Dorsolateral prefrontal cortex (tissue), 120 donors: ENCODE measurements at regions of chr16 and their contacts with region 1.

Region 1: DNA sequence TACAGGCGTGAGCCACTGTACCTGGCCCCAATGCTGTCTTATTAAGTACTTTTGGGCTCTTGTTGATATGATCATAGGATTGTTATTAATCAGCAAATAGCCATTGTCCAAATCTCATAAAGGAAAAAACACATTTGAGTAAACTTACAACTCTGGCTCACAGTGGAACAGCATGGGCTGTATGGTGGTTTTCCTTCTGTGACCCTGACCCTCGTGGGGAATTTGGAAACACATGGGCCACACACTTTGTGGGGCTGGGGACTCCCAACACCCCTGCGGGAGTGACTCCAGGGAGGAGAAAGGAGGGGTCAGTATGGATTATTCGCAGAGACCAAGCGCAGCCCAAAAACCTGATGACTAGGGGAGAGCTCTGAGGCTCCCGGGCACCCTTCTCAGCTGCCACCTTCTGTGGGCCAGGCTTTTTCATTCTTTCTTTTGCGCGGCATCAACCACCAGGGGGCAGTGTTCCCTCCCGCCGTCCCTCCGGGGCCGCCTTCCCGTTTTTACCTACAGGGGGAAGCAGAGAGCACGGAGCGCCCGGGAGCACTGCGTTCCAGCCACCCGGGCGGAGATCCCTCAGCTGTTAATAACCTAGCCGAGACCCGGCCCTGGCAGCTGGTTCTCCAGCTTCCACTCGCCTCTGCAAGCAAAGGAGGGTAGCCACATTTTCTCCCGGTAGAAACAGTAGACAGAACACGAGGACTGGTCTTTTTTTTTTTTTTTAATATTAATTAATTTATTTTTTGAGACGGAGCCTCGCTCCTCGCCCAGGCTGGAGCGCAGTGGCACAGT is 9.7 kb downstream of the TSNAXIP1 start:
- DNase-seq: peak; percentile 52 to 87 (median 70)
- H3K4me3 ChIP-seq: peak overlapping the region in 13 of 59 donors; percentile 2 to 40 (median 20)
- H3K27ac ChIP-seq: peak overlapping the region in 6 of 59 donors; percentile 9 to 62 (median 40)
- H3K27me3 ChIP-seq: no peaks in the 10 kb centered on the region
- CTCF ChIP-seq: peak; percentile 92 to 100 (median 100)

Region 2: DNA sequence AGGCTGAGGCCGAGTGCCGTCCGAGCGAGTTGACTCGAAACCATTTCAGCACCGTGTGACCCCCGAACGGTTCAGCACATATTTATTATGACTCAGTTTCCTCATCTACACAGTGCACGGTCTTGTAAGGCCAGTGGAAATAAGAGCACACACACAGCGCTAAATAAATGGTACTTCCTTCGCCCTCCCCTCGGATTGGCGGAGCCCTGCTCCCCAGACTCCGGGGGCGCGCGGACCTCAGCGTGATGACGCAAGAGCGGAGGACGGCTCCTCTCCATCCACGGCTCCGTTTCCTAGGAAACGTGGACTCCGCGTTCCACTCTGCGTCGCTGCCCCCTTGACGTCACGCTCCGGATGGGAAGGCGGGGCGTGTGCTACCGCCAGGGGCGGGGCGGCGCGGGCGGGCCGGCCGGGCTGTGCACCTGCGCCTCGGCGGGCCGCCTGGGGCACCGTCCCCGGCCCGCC is 155.8 kb before region 1 on chr16 and contains the start of gene PARD6A:
- intact Hi-C with region 1: no loop called
- DNase-seq: peak; percentile 90 to 98 (median 98)
- H3K4me3 ChIP-seq: peak within 1 kb of the TSS; percentile 57 to 100 (median 92)
- H3K27ac ChIP-seq: peak within 1 kb of the TSS; percentile 82 to 99 (median 97)
- H3K27me3 ChIP-seq: no peaks in the 10 kb centered on the region
- CTCF ChIP-seq: peak in 13 of 56 donors; percentile 2 to 29 (median 8)
- total RNA-seq, gene PARD6A: 13.9 to 52.7 (median 27.3) TPM

Region 3: DNA sequence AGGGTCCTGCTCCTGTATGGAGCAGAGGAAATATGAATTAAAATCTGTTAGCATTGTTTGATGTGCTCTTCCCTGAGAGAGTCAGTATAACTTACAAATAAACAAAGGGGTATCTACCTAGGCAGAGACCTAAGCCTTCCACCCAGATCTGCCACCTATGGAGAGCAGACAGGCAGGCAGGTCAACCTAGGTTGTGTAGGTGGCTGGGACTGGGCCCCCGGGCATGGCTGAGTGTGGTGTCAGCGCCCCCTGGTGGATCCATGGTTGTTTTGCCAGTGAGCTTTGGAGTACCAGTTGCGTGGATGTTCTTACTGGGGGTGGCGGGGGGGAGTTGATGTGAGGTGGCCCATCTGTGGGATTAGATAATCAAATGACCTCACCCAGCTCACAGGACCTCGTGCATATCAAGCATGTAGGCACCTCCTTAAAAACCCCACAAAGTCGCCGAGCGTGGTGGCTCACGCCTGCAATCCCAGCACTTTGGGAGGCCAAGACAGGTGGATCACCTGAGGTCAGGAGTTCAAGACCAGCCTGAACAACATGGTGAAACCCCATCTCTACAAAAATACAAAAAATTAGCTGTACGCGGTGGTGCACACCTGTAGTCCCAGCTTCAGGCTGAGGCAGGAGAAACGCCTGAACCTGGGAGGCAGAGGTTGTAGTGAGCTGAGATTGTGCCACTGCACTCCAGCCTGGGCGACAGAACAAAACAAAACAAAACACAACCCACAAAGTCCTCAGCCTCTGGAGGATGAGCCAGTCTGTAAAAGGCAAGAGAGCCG is 224.3 kb after region 1 on chr16:
- intact Hi-C with region 1: loop called (anchors 2 to 5 kb)
- DNase-seq: peak; percentile 69 to 85 (median 79)
- H3K4me3 ChIP-seq: no peak overlapping the region
- H3K27ac ChIP-seq: peak overlapping the region in 10 of 59 donors; percentile 0 to 48 (median 26)
- H3K27me3 ChIP-seq: no peaks in the 10 kb centered on the region
- CTCF ChIP-seq: peak; percentile 45 to 88 (median 78)